PC-3 (cell line): ENCODE measurements at regions of chr2 and their contacts with region 1.

Region 1: GRCh38 chr2:19863303-19864041 is 38.3 kb downstream of the TTC32 start:
- DNase-seq: peak; percentile 73
- ATAC-seq: peak; percentile 84
- H3K4me3 ChIP-seq: peak overlapping the region; percentile 53
- H3K27ac ChIP-seq: no peak overlapping the region
- H3K4me1 ChIP-seq: peaks cover 15% of the 10 kb centered on the region
- H3K27me3 ChIP-seq: no peaks in the 10 kb centered on the region
- CTCF ChIP-seq: peak; percentile 96

Region 2: DNA sequence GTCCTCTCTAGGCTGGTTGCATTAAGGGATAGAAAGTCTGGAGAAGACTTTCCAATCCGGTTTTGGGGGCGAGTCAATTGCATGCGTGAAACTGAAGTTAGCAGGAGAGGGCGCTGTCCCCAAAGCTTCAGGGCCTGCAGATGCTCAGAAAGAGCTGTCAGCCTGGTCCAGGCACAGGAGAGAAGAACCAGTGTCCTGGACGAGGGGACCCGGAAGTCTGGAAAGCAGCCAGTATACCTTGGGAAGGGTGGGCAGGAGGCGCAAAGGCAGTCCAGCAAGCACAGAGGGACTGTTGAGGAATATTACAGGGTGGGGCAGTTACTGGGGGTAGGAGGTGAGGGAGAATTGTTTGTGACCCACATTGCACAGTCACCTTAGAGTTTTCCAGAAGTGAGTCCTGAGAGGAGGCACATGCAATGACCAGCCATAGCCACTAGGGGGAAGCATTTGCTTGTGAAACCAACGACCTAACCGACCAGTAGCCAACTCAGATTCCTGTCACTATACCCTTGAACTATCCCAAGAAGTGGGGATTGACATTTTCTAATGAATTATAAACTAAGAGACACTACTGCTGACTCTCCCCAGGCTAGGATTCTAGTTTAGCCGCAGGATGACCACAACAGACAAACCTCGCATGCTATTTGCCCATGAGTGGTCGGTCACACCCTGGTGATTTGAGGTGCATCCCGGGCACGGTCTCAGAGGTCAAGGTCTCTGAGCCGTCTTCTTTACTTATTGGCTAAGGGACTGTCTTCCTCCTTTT is 1475.8 kb before region 1 on chr2:
- CTCF ChIA-PET with region 1: no interaction called
- POLR2A ChIA-PET with region 1: no interaction called
- intact Hi-C with region 1: loop called (anchors 1 kb)
- DNase-seq: peak; percentile 88
- ATAC-seq: peak; percentile 94
- H3K4me3 ChIP-seq: no peak overlapping the region
- H3K27ac ChIP-seq: no peak overlapping the region
- H3K4me1 ChIP-seq: no peaks in the 10 kb centered on the region
- H3K27me3 ChIP-seq: no peaks in the 10 kb centered on the region
- CTCF ChIP-seq: peak; percentile 95

Region 3: DNA sequence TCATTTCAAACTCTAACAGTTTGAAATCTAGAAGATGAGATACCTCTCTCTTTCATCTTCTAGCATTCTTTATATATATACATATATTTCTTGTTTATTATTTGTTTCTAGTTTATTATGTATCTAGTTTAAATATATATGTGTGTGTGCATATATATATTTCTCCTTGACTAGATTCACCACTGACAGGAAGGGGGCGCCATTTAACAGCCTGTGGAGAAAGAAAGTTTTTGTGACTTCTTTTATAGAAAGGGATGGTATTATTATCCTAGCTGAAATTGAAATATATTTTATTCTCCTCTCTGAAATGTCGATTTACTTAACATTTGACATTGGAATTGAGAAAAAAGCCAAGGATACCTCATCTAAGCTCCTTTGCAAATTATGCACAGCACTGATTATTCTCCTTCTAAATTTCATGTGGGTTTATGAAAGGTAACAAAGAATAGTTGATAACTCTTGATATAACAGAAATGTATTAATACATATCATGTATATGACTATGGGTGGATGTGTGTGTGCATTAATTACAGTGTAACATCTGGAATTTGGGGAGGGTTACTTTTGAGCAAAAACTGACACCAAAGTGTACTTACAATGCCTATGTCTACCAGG is 1113.5 kb before region 1 on chr2:
- CTCF ChIA-PET with region 1: no interaction called
- POLR2A ChIA-PET with region 1: no interaction called
- intact Hi-C with region 1: loop called (anchors 2 kb)
- DNase-seq: peak; percentile 74
- ATAC-seq: no peak
- H3K4me3 ChIP-seq: no peak overlapping the region
- H3K27ac ChIP-seq: no peak overlapping the region
- H3K4me1 ChIP-seq: peaks cover 35% of the 10 kb centered on the region
- H3K27me3 ChIP-seq: no peaks in the 10 kb centered on the region
- CTCF ChIP-seq: peak; percentile 83

Region 4: GRCh38 chr2:19611491-19612332 is 251.8 kb before region 1 on chr2:
- CTCF ChIA-PET with region 1: no interaction called
- POLR2A ChIA-PET with region 1: no interaction called
- intact Hi-C with region 1: loop called (anchors 1 kb)
- DNase-seq: peak; percentile 96
- ATAC-seq: peak; percentile 88
- H3K4me3 ChIP-seq: no peak overlapping the region
- H3K27ac ChIP-seq: peak overlapping the region; percentile 93
- H3K4me1 ChIP-seq: peaks cover 32% of the 10 kb centered on the region
- H3K27me3 ChIP-seq: no peaks in the 10 kb centered on the region
- CTCF ChIP-seq: no peak

Region 5: GRCh38 chr2:19769513-19769912 is 94.0 kb before region 1 on chr2:
- CTCF ChIA-PET with region 1: no interaction called
- POLR2A ChIA-PET with region 1: no interaction called
- intact Hi-C with region 1: loop called (anchors 5 kb)
- DNase-seq: peak; percentile 55
- ATAC-seq: no peak
- H3K4me3 ChIP-seq: no peak overlapping the region
- H3K27ac ChIP-seq: no peak overlapping the region
- H3K4me1 ChIP-seq: no peaks in the 10 kb centered on the region
- H3K27me3 ChIP-seq: no peaks in the 10 kb centered on the region
- CTCF ChIP-seq: peak; percentile 64